ENCODE measurements at regions of chr2 and their contacts with region 1.

Region 1: DNA sequence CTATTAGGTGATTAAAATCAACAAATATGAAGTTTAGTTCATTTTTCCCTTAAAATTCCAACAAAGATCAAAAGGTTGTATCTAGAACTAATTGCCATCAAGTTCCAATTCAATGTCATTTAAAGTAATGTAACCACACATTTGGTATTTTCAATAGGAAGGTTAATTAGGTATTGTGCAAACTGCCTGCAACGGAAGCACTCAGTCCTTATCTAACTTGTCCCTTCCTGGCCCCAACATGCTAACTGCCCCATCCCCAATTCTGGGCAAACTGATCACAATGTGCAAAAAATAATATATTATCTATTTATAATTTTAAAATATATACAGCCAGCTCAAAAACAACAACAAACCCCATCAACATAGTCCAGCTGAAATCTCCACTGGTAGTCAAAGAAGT is 33.2 kb downstream of the VIL1 start:
- DNase-seq: no peak
- H3K4me3 Mint-ChIP-seq: no peak overlapping the region
- H3K27ac Mint-ChIP-seq: no peak overlapping the region
- H3K4me1 Mint-ChIP-seq: peaks cover 9% of the 10 kb centered on the region
- H3K27me3 Mint-ChIP-seq: no peaks in the 10 kb centered on the region

Region 2: DNA sequence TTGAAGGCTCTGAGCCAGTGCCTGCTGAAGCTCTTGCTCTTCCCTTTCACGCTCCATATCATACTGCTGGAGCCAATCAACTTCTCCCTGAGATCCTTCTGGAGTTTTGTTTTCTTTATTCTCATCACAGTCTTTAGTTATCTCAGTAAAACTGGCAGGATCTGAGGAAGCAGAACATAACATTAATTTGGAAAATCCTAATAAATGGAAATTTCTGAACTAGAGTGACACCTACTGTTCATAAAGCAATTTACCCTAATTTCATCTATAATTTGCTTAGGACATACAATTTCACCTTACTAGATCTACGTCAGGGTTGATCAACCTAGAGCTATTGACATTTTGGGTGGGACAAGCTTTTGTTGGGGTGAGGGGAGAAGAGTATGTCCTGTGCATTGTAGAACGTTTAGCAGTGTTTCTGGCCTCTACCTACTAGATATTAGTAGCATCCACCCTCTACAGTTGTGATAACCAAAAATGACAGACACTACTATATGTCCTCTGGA is 14.0 kb after region 1 on chr2:
- CTCF ChIA-PET with region 1: interaction called, 11 read pairs
- POLR2A ChIA-PET with region 1: interaction called, 9 read pairs
- DNase-seq: no peak
- H3K4me3 Mint-ChIP-seq: no peak overlapping the region
- H3K27ac Mint-ChIP-seq: no peak overlapping the region
- H3K4me1 Mint-ChIP-seq: peaks cover 7% of the 10 kb centered on the region
- H3K27me3 Mint-ChIP-seq: no peaks in the 10 kb centered on the region